ENCODE measurements at regions of chr2 and their contacts with region 1.

Region 1: DNA sequence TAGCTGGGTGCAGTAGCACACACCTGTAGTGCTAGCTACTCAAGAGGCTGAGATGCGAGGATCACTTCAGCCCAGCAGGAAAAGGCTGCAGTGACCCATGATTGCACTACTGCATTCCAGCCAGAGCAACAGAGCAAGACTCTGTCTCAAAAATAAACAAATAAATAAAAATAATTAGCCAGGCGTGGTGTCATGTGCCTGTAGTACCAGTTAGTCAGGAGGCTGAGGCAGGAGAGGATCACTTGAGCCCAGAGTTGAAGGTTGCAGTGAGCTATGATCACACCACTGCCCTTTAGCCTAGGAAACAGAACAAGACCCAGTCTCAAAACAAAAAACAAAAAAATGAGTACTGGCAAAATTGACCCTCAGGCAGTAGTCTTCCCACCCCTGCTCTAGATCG is 61.9 kb upstream of the PPP1CB start:
- DNase-seq: no peak
- H3K4me3 Mint-ChIP-seq: no peak overlapping the region
- H3K27ac Mint-ChIP-seq: no peak overlapping the region
- H3K4me1 Mint-ChIP-seq: peaks cover 31% of the 10 kb centered on the region
- H3K27me3 Mint-ChIP-seq: peaks cover 1% of the 10 kb centered on the region

Region 2: DNA sequence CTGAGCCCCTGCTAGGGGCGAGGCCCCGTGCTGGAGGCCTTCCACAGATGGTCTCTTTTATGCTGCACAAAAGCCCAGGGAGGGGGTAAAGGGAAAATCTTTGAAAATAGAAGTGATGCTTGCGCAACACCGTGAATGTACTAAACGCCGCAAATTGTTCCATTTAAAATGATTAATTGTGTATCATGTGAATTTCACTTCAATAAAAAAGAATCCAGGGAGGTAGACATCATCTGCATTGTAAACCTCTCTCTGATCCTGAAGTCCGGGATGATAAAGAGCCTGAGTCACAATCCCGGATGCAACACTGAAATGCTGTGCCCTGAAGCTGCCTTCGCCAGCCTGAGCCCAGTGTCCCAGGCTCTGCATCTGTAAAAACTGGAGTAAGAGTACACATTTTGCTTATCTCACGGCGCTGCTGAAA is 45.9 kb before region 1 on chr2:
- intact Hi-C with region 1: no loop called
- DNase-seq: no peak
- H3K4me3 Mint-ChIP-seq: no peak overlapping the region
- H3K27ac Mint-ChIP-seq: no peak overlapping the region
- H3K4me1 Mint-ChIP-seq: peaks cover 26% of the 10 kb centered on the region
- H3K27me3 Mint-ChIP-seq: no peaks in the 10 kb centered on the region

Region 3: DNA sequence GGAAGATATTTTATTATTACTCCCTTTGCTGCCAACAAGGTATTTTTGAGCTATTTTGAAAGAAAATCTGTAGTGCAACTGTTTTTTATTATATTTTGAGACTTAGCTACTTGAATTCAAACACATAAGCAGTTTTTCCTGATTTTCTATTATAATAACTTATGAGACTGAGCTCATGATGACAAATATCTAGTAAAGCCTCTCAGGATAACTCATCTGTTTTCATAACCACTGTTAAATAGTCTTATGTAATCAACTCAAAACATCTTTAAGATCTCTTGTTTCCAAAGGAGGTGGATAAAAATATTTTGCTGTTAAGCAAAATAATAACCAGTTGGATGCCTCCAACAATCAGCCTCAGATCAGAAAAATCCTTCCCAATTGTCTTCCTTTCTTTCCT is 39.9 kb after region 1 on chr2:
- intact Hi-C with region 1: loop called (anchors 5 kb)
- DNase-seq: no peak
- H3K4me3 Mint-ChIP-seq: no peak overlapping the region
- H3K27ac Mint-ChIP-seq: no peak overlapping the region
- H3K4me1 Mint-ChIP-seq: no peaks in the 10 kb centered on the region
- H3K27me3 Mint-ChIP-seq: no peaks in the 10 kb centered on the region

Region 4: DNA sequence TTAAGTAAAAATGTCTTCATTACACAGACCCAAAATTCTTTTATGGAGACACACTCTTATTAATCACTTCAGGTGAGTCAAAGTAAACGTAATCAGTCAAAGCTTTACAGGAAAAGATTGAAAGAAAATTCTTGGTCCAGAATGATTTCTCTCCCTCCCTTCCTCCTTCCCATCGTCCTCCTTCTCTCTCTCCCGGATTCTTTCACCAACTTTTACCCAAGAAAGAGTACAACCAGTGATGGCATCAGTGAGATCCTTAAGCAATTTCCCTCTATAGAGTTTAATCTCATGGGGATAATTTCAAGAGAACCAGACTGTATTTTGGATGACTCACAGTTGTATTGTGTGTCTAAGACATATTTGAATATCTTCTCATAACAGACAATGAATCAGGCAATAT is 973.5 kb after region 1 on chr2:
- intact Hi-C with region 1: no loop called
- DNase-seq: no peak
- H3K4me3 Mint-ChIP-seq: no peak overlapping the region
- H3K27ac Mint-ChIP-seq: no peak overlapping the region
- H3K4me1 Mint-ChIP-seq: no peaks in the 10 kb centered on the region
- H3K27me3 Mint-ChIP-seq: peaks cover 2% of the 10 kb centered on the region